AG04450 (cell line): ENCODE measurements at regions of chr13 and their contacts with region 1.

Region 1: DNA sequence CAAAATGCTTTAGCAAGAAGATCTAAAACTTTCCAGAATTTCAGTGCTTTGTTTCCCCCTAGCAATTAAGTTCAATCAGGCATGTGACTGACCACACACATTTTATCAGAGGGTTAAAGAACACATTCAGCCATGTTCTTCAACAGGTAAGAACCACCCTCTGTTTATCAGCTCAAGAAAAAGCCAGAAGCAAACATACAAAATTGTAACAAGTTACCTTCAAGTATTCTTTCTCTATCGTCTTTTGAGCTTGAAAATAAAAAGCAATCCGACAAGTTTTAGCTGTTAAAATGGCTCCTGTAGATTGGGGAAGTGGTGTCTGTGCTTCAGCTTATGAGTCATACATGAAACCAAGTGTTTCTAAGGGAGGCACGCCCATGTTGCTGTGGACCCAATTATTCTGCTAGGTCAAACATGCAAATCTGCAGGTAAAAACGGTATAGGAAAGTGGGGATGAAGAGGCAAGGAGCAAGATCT is at the start of gene ELF1:
- DNase-seq: no peak
- H3K4me3 ChIP-seq: no peak within 1 kb of the TSS
- H3K27ac ChIP-seq: no peak within 1 kb of the TSS
- H3K27me3 ChIP-seq: no peaks in the 10 kb centered on the region
- CTCF ChIP-seq: no peak
- polyA plus RNA-seq, gene ELF1: 37.8 and 46.8 TPM in 2 replicates

Region 2: DNA sequence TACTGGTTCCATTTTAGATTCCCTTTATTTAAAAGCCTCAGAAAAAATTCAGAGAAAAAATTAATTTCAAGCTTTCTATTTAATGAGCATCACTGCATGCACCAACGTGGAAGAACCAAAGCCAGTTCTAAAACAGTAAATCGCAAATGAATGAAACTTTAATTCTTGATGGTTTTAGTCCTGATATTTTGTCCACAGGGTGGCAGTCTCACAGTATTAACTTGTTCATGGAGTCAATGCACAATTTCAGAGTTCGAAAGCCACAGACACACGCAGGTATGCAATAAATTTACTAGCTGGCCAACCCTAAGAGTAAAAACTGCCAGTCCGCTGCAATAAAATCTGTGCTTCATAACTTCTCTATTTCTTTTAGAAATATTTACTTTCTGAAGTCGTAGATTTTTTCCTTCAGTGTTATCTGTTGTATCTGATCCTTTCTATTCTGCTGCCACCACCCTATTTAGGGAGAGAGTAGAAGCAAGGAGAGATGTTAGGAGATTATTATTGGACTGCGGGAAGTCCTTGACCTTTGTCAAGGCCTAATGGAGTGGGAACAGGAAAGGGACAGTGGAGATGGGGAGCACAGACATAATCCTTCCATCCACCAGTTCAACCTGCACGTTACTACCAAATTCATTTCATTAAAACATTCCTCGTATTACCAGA is 35.3 kb after region 1 on chr13:
- CTCF ChIA-PET with region 1: interaction called, 11 read pairs
- POLR2A ChIA-PET with region 1: no interaction called
- DNase-seq: no peak
- H3K4me3 ChIP-seq: no peak overlapping the region
- H3K27ac ChIP-seq: no peak overlapping the region
- H3K27me3 ChIP-seq: no peaks in the 10 kb centered on the region
- CTCF ChIP-seq: peak; percentile 53

Region 3: DNA sequence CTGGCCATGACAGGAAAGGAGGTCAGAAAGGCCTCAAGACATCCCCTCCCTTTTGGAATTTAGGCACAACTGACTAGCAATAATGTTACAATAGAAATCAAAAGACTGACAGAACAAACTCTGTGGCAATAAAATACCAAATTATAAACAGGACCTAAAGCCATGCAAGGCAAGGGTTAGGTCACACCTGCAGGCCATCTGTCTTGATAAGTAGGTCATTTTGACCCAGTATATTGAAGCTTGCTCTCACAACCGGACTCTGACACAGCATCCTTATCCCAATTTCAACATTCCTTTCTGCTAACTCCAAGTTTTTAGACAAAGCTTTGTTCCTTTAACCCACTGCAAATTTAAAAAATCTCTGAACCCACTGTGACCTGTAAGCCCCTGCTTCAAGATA is 82.8 kb after region 1 on chr13:
- CTCF ChIA-PET with region 1: no interaction called
- POLR2A ChIA-PET with region 1: no interaction called
- DNase-seq: no peak
- H3K4me3 ChIP-seq: no peak overlapping the region
- H3K27ac ChIP-seq: no peak overlapping the region
- H3K27me3 ChIP-seq: no peaks in the 10 kb centered on the region
- CTCF ChIP-seq: no peak

Region 4: DNA sequence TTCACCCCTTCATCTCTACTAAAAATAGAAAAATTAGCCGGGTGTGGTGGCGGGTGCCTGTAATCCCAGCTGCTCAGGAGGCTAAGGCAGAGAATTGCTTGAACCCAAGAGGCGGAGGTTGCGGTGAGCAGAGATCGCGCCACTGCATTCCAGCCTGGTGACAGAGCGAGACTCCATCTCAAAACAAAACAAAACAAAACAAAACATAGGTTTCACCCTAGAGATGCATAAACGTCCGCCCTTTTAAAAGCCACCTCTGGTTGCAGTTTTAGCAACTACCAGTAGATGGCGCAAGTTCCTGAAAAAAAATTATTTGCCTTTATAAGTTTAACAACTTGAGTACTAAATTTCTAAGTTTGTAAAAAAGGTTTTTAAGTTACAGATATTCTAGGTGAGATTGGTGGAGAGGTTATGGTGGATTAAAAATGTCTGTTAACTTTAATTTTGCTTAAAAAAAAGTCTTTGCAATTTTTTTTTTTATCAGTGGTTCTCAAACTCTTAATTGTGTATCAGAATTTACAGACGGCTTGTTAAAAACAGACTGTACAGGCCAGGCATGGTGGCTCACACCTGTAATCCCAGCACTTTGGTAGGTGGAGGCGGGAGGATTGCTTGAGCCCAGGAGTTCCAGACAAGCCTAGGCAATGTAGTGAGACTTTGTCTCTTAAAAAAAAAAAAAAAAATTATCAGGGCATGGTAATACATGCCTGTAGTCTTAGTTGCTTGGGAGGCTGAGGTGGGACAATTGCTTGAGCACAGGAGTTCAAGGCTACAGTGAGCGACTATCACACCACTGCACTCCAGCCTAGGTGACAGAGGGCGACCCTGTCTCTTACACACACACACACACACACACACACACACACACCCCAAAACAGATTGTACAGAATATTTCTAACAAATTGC is 334.1 kb after region 1 on chr13:
- CTCF ChIA-PET with region 1: no interaction called
- POLR2A ChIA-PET with region 1: no interaction called
- DNase-seq: peak; percentile 13
- H3K4me3 ChIP-seq: no peak overlapping the region
- H3K27ac ChIP-seq: no peak overlapping the region
- H3K27me3 ChIP-seq: no peaks in the 10 kb centered on the region
- CTCF ChIP-seq: peak; percentile 82